ENCODE measurements at regions of chr3 and their contacts with region 1.

Region 1: DNA sequence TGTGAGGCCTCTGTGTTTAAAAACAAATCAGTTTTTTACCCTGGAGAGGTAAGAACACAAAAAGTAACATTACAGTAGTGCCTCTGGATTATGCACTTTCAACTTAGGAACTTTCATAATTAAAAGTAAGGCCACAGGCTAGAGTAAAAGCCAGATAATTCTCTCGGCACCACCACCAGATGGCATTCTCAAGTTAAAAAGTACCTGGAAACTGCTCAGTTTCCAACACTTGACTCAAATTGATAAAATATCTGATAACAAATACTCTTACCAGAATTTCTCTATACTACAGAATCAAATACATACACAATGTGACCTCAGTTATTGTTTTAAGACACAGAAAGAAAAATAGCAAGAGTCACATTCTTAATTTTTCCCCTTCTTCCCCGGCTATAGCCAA is 19.9 kb downstream of the SPICE1 start:
- DNase-seq: no peak
- H3K4me3 ChIP-seq: no peak overlapping the region
- H3K27ac ChIP-seq: no peak overlapping the region
- H3K4me1 ChIP-seq: no peaks in the 10 kb centered on the region
- H3K27me3 ChIP-seq: no peaks in the 10 kb centered on the region
- CTCF ChIP-seq: peak in 3 of 4 experiments; percentile 20 to 39 (median 37)
- EP300 ChIP-seq: no peak
- POLR2A ChIP-seq: no peak

Region 2: DNA sequence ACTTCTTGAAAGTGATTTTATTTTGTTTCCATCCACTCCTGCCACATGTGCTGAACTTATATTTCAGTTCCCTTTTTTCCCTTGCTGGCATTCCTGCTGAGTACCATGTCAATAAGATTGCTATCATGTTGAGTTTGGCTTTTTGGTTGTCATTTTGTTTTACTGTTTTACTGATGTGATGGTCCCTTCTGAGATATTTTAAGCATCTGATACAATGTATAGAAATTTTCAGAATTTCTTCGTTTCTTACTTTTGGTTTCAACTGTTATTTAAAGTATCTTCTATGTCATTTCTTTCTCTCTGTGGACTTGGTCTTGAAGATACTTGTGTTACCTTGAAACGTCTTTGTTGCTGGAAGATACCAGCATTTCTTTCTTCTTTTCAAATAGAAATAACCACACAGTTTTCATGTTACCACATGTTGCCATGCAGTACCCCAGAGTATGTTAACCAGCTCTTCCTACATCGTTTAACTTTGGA is 51.4 kb after region 1 on chr3:
- intact Hi-C with region 1: no loop called
- DNase-seq: no peak
- H3K4me3 ChIP-seq: no peak overlapping the region
- H3K27ac ChIP-seq: no peak overlapping the region
- H3K4me1 ChIP-seq: no peaks in the 10 kb centered on the region
- H3K27me3 ChIP-seq: no peaks in the 10 kb centered on the region
- CTCF ChIP-seq: no peak
- EP300 ChIP-seq: no peak
- POLR2A ChIP-seq: no peak

Region 3: DNA sequence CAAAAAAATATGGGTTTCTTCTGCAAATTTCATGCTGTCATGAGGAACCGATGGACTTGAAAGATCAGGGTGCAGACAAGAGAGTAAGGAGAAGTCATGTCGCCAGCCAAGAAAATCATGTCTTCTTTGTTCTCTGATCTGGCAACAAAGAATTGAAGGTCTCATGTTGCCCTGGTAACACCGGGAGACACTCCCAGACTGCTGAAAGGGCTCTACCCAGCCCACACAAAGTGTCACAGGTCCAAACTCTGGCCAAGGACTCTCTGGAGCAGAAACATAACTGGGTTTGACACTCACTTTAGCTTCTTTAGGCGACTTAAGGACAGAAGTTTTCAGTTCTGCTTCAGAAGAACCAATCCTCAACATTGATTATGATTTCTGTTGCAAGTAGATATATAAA is 80.2 kb after region 1 on chr3:
- intact Hi-C with region 1: loop called (anchors 5 kb)
- DNase-seq: no peak
- H3K4me3 ChIP-seq: no peak overlapping the region
- H3K27ac ChIP-seq: no peak overlapping the region
- H3K4me1 ChIP-seq: no peaks in the 10 kb centered on the region
- H3K27me3 ChIP-seq: no peaks in the 10 kb centered on the region
- CTCF ChIP-seq: no peak
- EP300 ChIP-seq: no peak
- POLR2A ChIP-seq: no peak

Region 4: DNA sequence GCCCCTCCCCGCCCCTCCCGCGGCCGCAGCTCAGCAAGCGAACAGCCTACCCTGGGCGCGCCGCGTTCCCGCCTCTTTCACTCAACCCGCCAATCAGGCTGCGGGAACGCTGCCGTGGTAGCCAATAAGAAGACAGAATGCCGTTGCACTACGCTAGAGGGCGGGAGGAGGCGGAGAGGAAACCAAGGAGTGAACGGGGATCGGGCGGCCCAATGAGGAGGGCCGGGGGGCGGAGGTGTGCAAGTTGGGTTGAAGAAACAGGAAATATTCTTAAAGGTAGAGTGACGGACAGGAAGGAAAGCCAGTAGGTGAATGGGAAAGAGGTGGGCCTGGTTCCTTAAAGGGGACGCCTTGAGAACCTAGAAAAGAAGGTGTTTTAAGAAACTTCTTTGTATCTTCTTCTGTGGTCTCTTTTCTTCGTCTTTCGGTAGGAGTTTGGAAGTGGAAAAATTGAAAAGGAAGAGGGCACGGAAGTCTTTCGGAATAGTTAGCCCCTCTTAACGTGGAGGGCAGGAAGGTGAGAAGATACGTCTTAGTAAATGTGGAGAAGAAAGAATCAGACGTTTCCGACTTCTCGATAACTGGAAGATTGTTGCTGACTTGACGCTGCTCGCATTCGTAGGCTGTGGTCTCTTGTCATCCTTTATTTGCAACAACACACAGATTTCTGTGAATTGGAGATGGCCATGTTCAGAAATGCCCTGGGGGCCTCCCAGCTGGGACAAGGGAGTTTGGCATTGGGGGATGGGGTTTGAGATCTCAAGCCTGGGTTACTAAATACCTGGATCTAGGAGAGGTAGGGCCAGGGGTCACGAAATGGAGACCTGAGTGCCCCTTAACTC is 201.8 kb after region 1 on chr3:
- intact Hi-C with region 1: no loop called
- DNase-seq: peak; percentile 100
- H3K4me3 ChIP-seq: peak overlapping the region; percentile 91 to 100 (median 98)
- H3K27ac ChIP-seq: peak overlapping the region; percentile 99 to 100 (median 100)
- H3K4me1 ChIP-seq: peaks cover 0 to 39% (median 27%) of the 10 kb centered on the region in 4 donors
- H3K27me3 ChIP-seq: no peaks in the 10 kb centered on the region
- CTCF ChIP-seq: no peak
- EP300 ChIP-seq: no peak
- POLR2A ChIP-seq: no peak

Region 5: DNA sequence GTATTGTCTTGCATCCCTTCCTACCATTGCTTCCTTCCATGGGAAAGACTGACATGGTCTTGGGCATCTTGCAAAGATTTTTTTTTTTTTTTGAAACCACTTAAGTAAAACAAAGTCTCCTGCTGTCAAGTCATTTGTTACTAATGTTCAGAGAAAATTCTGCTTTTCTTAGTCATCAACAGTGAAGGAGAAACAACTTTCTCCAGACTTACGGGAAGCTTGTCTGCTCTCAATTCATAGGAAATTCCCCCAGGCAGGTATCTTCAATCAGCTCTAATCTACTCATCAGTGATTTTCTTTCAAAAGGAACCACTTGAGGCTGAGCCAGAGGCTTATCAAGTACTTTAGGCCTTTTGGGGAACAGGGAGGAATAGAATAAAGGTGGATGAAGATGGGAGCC is 699.7 kb after region 1 on chr3:
- intact Hi-C with region 1: no loop called
- DNase-seq: no peak
- H3K4me3 ChIP-seq: no peak overlapping the region
- H3K27ac ChIP-seq: no peak overlapping the region
- H3K4me1 ChIP-seq: no peaks in the 10 kb centered on the region
- H3K27me3 ChIP-seq: no peaks in the 10 kb centered on the region
- CTCF ChIP-seq: no peak
- EP300 ChIP-seq: no peak
- POLR2A ChIP-seq: no peak